CD4-positive, alpha-beta T cell (primary cell): ENCODE measurements at regions of chr11 and their contacts with region 1.

Region 1: DNA sequence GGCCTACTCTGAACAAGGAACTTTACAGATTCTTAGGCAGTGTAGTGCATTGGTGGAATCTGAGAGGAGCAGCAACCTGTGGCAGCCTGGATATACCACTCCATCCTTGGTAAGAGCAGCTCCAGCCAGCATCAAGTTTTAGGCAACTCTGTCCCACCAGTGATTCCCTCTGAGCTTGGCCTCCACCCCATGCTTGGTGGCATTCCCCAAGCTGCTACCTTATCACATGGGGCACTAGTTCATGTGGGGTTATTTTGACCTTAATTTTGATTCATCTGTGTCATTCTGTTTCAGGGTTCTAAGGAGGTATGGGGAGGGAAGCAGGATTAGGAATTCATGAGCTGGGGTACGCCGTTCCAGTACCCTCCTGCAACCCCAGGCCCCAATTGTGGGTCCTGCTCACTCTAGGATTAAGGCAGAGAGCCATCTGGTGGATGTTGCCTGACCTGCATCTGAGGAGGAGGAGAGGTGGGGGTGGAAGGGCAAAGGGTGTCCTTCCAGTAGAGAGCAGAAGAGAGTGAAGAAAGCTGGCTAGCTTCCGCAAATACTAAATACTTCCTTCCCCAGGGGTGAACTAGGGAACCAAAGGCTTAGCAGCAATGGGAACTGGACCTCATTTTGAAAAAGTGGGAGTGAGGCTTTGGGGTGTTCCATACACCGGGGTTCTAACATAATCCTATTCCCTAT is 10.5 kb downstream of the LRRC51 start:
- DNase-seq: peak; percentile 56 to 85 (median 72)
- ATAC-seq: peak; percentile 100
- H3K4me3 ChIP-seq: no peak overlapping the region
- H3K4me3 Mint-ChIP-seq: no peak overlapping the region
- H3K27ac ChIP-seq: no peak overlapping the region
- H3K27ac Mint-ChIP-seq: peak overlapping the region; percentile 73
- H3K4me1 ChIP-seq: peaks cover 5% of the 10 kb centered on the region
- H3K4me1 Mint-ChIP-seq: peaks cover 14% of the 10 kb centered on the region
- H3K27me3 ChIP-seq: no peaks in the 10 kb centered on the region
- H3K27me3 Mint-ChIP-seq: no peaks in the 10 kb centered on the region
- CTCF ChIP-seq: peak; percentile 86

Region 2: GRCh38 chr11:71977743-71978418 is 113.3 kb before region 1 on chr11:
- CTCF ChIA-PET with region 1: interaction called, 4 read pairs
- POLR2A ChIA-PET with region 1: no interaction called
- intact Hi-C with region 1: loop called (anchors 1 to 2 kb)
- DNase-seq: peak; percentile 20 to 75 (median 40)
- ATAC-seq: peak; percentile 62
- H3K4me3 ChIP-seq: no peak overlapping the region
- H3K4me3 Mint-ChIP-seq: no peak overlapping the region
- H3K27ac ChIP-seq: no peak overlapping the region
- H3K27ac Mint-ChIP-seq: no peak overlapping the region
- H3K4me1 ChIP-seq: no peaks in the 10 kb centered on the region
- H3K4me1 Mint-ChIP-seq: no peaks in the 10 kb centered on the region
- H3K27me3 ChIP-seq: no peaks in the 10 kb centered on the region
- H3K27me3 Mint-ChIP-seq: no peaks in the 10 kb centered on the region
- CTCF ChIP-seq: peak; percentile 72

Region 3: GRCh38 chr11:72024069-72024754 is 66.9 kb before region 1 on chr11:
- CTCF ChIA-PET with region 1: interaction called, 74 read pairs
- POLR2A ChIA-PET with region 1: interaction called, 21 read pairs
- intact Hi-C with region 1: loop called (anchors 1 kb)
- DNase-seq: no peak
- ATAC-seq: no peak
- H3K4me3 ChIP-seq: no peak overlapping the region
- H3K4me3 Mint-ChIP-seq: no peak overlapping the region
- H3K27ac ChIP-seq: no peak overlapping the region
- H3K27ac Mint-ChIP-seq: peak overlapping the region; percentile 81
- H3K4me1 ChIP-seq: peaks cover 20% of the 10 kb centered on the region
- H3K4me1 Mint-ChIP-seq: peaks cover 43% of the 10 kb centered on the region
- H3K27me3 ChIP-seq: no peaks in the 10 kb centered on the region
- H3K27me3 Mint-ChIP-seq: no peaks in the 10 kb centered on the region
- CTCF ChIP-seq: no peak

Region 4: GRCh38 chr11:72030472-72031045 is 60.6 kb before region 1 on chr11:
- CTCF ChIA-PET with region 1: interaction called, 74 read pairs
- POLR2A ChIA-PET with region 1: interaction called, 21 read pairs
- intact Hi-C with region 1: loop called (anchors 1 kb)
- DNase-seq: no peak
- ATAC-seq: no peak
- H3K4me3 ChIP-seq: no peak overlapping the region
- H3K4me3 Mint-ChIP-seq: no peak overlapping the region
- H3K27ac ChIP-seq: peak overlapping the region in 1 of 2 donors; percentile 17
- H3K27ac Mint-ChIP-seq: peak overlapping the region; percentile 66
- H3K4me1 ChIP-seq: peaks cover 54% of the 10 kb centered on the region
- H3K4me1 Mint-ChIP-seq: peaks cover 68% of the 10 kb centered on the region
- H3K27me3 ChIP-seq: no peaks in the 10 kb centered on the region
- H3K27me3 Mint-ChIP-seq: no peaks in the 10 kb centered on the region
- CTCF ChIP-seq: no peak

Region 5: GRCh38 chr11:72080256-72080974 is 10.7 kb before region 1 on chr11 and contains the starts of genes LRRC51 and NUMA1:
- CTCF ChIA-PET with region 1: interaction called, 18 read pairs
- POLR2A ChIA-PET with region 1: interaction called, 3 read pairs
- intact Hi-C with region 1: no loop called
- DNase-seq: peak; percentile 97 to 100 (median 99)
- ATAC-seq: peak; percentile 84
- H3K4me3 ChIP-seq: peak within 1 kb of the TSS; percentile 73
- H3K4me3 Mint-ChIP-seq: peak within 1 kb of the TSS; percentile 95
- H3K27ac ChIP-seq: peak within 1 kb of the TSS; percentile 82 to 93
- H3K27ac Mint-ChIP-seq: peak within 1 kb of the TSS; percentile 92
- H3K4me1 ChIP-seq: peaks cover 31% of the 10 kb centered on the region
- H3K4me1 Mint-ChIP-seq: peaks cover 41% of the 10 kb centered on the region
- H3K27me3 ChIP-seq: no peaks in the 10 kb centered on the region
- H3K27me3 Mint-ChIP-seq: no peaks in the 10 kb centered on the region
- CTCF ChIP-seq: no peak
- total RNA-seq, gene LRRC51: 0.87 to 1.1 TPM
- total RNA-seq, gene NUMA1: 191 to 197 TPM

Region 6: DNA sequence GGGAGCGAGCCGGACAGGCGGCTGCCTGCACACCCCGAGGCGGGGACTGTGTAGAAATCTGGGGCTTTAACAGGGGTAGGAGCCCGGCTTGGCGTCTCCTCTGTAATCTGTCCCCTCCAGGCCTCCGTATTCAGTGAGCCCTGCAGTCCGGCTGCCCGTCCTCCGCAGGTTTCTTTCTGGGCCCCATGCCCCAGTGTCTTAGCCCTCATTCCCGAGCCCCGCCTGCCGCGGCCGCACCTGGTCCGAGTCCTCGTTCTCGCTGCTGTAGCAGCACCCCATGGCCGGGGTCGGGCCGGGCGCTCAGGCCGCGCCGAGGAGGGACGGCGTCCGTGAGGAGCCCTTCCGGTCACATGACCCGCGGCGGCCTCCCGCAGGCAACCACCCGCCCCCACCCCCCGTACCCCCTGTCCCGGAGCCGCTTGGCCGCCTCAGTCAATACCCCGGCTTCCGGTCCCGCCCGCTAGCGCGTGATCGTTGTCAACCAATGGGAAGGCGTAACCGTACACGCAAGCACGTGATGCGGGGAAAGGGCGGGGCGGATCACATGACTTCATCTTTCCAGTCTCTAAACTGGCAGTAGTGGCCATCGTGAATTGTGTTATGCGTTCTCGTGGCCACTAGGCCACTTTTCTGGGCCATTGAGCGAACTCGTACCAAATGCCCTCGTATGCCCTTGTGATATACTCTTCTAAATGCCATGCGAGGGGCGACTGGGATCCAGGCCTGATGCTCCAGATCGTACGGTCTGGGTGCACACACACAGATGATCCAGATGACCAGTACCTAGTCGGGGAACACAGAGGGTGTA is 12.0 kb after region 1 on chr11 and contains the start of gene LAMTOR1:
- CTCF ChIA-PET with region 1: interaction called, 21 read pairs
- POLR2A ChIA-PET with region 1: interaction called, 3 read pairs
- intact Hi-C with region 1: no loop called
- DNase-seq: peak; percentile 94 to 98 (median 97)
- ATAC-seq: peak; percentile 95
- H3K4me3 ChIP-seq: peak within 1 kb of the TSS; percentile 93
- H3K4me3 Mint-ChIP-seq: peak within 1 kb of the TSS; percentile 91
- H3K27ac ChIP-seq: peak within 1 kb of the TSS; percentile 88 to 93
- H3K27ac Mint-ChIP-seq: peak within 1 kb of the TSS; percentile 98
- H3K4me1 ChIP-seq: peaks cover 34% of the 10 kb centered on the region
- H3K4me1 Mint-ChIP-seq: peaks cover 49% of the 10 kb centered on the region
- H3K27me3 ChIP-seq: no peaks in the 10 kb centered on the region
- H3K27me3 Mint-ChIP-seq: no peaks in the 10 kb centered on the region
- CTCF ChIP-seq: peak; percentile 36
- total RNA-seq, gene LAMTOR1: 29.5 to 30.4 TPM

Region 7: GRCh38 chr11:72141066-72141465 is 49.9 kb after region 1 on chr11:
- CTCF ChIA-PET with region 1: interaction called, 13 read pairs
- POLR2A ChIA-PET with region 1: no interaction called
- intact Hi-C with region 1: no loop called
- DNase-seq: peak in 1 of 14 experiments; percentile 4
- ATAC-seq: peak; percentile 25
- H3K4me3 ChIP-seq: no peak overlapping the region
- H3K4me3 Mint-ChIP-seq: no peak overlapping the region
- H3K27ac ChIP-seq: no peak overlapping the region
- H3K27ac Mint-ChIP-seq: no peak overlapping the region
- H3K4me1 ChIP-seq: no peaks in the 10 kb centered on the region
- H3K4me1 Mint-ChIP-seq: no peaks in the 10 kb centered on the region
- H3K27me3 ChIP-seq: no peaks in the 10 kb centered on the region
- H3K27me3 Mint-ChIP-seq: peaks cover 11% of the 10 kb centered on the region
- CTCF ChIP-seq: no peak